CD8-positive, alpha-beta T cell (primary cell): ENCODE measurements at regions of chr2 and their contacts with region 1.

Region 1: GRCh38 chr2:201071479-201072200 is at the starts of genes HYCC2 and NDUFB3:
- DNase-seq: peak; percentile 79 to 98 (median 92)
- ATAC-seq: peak; percentile 93
- H3K4me3 ChIP-seq: peak within 1 kb of the TSS; percentile 61 to 70
- H3K4me3 Mint-ChIP-seq: peak within 1 kb of the TSS; percentile 95
- H3K27ac ChIP-seq: peak within 1 kb of the TSS; percentile 61 to 81
- H3K27ac Mint-ChIP-seq: peak within 1 kb of the TSS; percentile 97
- H3K4me1 ChIP-seq: peaks cover 42% of the 10 kb centered on the region
- H3K4me1 Mint-ChIP-seq: peaks cover 54% of the 10 kb centered on the region
- H3K27me3 ChIP-seq: no peaks in the 10 kb centered on the region
- H3K27me3 Mint-ChIP-seq: no peaks in the 10 kb centered on the region
- CTCF ChIP-seq: peak; percentile 38
- total RNA-seq, gene HYCC2: 35.7 to 36.8 TPM
- total RNA-seq, gene NDUFB3: 11.6 to 13.1 TPM

Region 2: DNA sequence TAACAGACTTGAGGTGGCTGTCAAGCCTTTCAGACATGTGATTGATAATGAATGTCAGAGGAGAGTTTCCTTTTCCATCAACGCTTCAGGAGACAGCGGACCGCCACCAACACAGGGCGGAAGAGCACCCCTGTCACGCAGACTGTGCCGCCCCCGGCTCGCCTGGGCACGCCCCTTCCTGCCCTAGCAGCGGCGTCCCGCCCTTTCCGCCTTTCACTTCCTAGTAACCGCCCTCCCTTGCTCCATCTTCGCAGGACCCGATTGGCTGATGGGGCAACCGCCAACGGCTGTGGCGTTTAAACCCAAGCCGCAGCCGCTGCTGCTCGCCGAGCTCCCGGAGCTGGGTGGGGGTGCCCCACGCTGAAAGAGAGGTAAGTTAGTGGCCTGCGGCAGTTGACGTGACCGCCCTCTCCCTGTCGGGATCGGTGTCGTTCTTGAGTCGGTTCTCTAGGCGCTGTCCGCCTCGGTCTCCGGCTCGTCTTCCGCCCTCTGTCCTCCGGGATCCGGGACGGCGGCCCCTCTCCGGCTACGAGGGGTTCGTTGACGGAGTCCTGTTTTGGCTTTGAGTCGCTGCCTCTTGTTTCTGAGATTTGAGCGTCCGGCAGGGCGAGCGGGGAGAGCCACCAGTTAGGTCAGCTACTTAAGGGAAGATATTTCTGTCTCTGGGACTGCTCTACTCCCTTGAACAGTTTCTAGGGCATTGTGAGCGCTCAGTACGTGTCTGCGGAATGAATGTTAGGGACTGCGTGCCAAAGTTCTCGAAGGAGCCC is 545.6 kb before region 1 on chr2 and contains the start of gene SGO2:
- CTCF ChIA-PET with region 1: no interaction called
- POLR2A ChIA-PET with region 1: no interaction called
- intact Hi-C with region 1: loop called (anchors 5 to 10 kb)
- DNase-seq: peak; percentile 92 to 97 (median 95)
- ATAC-seq: peak; percentile 100
- H3K4me3 ChIP-seq: peak within 1 kb of the TSS; percentile 73 to 84
- H3K4me3 Mint-ChIP-seq: peak within 1 kb of the TSS; percentile 91
- H3K27ac ChIP-seq: peak within 1 kb of the TSS; percentile 18 to 71
- H3K27ac Mint-ChIP-seq: peak within 1 kb of the TSS; percentile 87
- H3K4me1 ChIP-seq: peaks cover 7% of the 10 kb centered on the region
- H3K4me1 Mint-ChIP-seq: peaks cover 10% of the 10 kb centered on the region
- H3K27me3 ChIP-seq: no peaks in the 10 kb centered on the region
- H3K27me3 Mint-ChIP-seq: no peaks in the 10 kb centered on the region
- CTCF ChIP-seq: no peak
- total RNA-seq, gene SGO2: 0.52 to 0.69 TPM

Region 3: DNA sequence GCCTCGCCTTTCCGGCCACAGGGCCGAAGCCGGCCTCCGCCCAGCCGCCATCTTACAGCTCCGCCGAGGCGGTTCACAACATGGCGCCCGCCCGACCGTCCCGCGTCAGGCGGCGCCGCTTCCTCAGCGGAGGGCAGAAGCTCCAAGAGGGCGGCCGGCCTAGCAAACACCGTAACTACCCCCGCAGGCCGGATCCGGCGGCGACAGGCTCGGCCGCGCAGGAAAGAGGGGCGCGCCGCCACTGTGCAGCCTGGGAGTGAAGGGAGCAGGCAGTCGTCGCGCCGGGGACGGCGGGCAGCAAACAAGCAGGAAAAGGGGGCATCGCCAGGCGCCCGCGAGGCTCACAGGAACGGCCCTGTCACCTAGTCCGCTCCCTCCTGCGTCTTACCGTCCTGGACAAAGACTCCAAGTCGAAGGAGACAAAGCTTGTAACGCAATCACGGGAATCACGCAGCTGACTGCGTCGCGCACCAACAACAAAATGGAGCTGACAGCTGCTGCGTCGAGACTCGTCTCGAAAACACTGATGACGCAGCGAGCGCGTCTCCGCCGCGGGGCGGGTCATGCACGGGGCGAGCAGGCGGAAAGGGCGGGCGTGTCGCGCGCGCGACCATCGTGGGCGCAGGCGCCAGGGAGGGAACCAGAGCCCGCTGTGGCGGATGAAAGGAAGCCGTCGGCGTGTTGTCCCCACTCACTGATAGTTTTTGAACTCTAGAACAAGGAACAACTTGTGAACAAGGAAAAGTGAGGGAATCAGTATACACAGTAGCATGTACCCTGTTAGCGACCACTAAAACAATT is 207.3 kb before region 1 on chr2 and contains the start of gene CLK1:
- CTCF ChIA-PET with region 1: no interaction called
- POLR2A ChIA-PET with region 1: interaction called, 7 read pairs
- intact Hi-C with region 1: loop called in 1 of 2 experiments (anchors 1 kb)
- DNase-seq: peak; percentile 94 to 99 (median 98)
- ATAC-seq: peak; percentile 78
- H3K4me3 ChIP-seq: peak within 1 kb of the TSS; percentile 84 to 98
- H3K4me3 Mint-ChIP-seq: peak within 1 kb of the TSS; percentile 96
- H3K27ac ChIP-seq: peak within 1 kb of the TSS; percentile 98 to 100
- H3K27ac Mint-ChIP-seq: peak within 1 kb of the TSS; percentile 100
- H3K4me1 ChIP-seq: peaks cover 29% of the 10 kb centered on the region
- H3K4me1 Mint-ChIP-seq: peaks cover 43% of the 10 kb centered on the region
- H3K27me3 ChIP-seq: no peaks in the 10 kb centered on the region
- H3K27me3 Mint-ChIP-seq: no peaks in the 10 kb centered on the region
- CTCF ChIP-seq: no peak
- total RNA-seq, gene CLK1: 1,353 to 1,404 TPM

Region 4: DNA sequence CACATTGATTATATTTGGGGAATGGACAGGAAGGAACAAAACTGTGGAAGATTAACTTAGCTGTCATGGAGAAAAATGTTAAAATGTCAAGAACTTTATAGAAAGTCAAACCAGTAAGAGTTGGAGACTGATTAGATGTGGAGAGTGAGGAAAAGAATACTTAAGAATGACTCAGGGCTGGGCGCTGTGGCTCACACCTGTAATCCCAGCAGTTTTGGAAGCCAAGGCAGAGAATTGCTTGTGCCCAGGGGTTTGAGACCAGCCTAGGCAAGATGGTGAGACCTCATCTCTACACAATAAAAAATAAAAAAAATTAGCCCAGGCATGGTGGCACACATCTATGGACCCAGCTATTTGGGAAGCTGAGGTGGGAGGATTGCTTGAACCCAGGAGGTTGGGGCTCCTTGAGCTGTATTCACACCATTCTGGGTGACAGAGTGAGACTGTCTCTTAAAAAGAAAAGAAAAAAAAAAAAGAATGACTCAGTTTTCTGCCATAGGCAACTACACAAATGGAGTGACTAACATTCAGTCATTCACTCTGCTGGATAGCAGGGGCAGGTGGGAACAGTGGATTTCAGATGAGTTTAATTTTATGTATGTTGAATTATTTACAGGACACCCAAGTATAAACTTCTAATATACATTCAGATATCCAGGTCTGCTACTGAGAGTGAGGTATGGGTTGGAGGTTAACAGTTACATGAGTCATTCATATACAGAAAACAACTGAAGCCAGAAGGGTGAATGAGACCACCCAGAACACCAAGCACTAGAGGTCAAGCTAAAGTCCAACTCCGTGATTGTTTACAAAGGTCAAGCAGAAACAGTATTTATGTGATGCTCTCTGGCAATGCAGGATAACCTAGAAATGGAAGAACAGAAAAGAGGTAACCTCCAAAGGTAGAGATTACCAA is 142.0 kb before region 1 on chr2:
- CTCF ChIA-PET with region 1: interaction called, 10 read pairs
- POLR2A ChIA-PET with region 1: no interaction called
- intact Hi-C with region 1: no loop called
- DNase-seq: no peak
- ATAC-seq: no peak
- H3K4me3 ChIP-seq: no peak overlapping the region
- H3K4me3 Mint-ChIP-seq: no peak overlapping the region
- H3K27ac ChIP-seq: no peak overlapping the region
- H3K27ac Mint-ChIP-seq: peak overlapping the region; percentile 62
- H3K4me1 ChIP-seq: no peaks in the 10 kb centered on the region
- H3K4me1 Mint-ChIP-seq: no peaks in the 10 kb centered on the region
- H3K27me3 ChIP-seq: no peaks in the 10 kb centered on the region
- H3K27me3 Mint-ChIP-seq: no peaks in the 10 kb centered on the region
- CTCF ChIP-seq: no peak

Region 5: GRCh38 chr2:201118121-201118960 is 46.7 kb after region 1 on chr2:
- CTCF ChIA-PET with region 1: interaction called, 40 read pairs
- POLR2A ChIA-PET with region 1: interaction called, 67 read pairs
- intact Hi-C with region 1: loop called (anchors 1 kb)
- DNase-seq: peak; percentile 77 to 94 (median 89)
- ATAC-seq: peak; percentile 43
- H3K4me3 ChIP-seq: peak overlapping the region; percentile 82 to 95
- H3K4me3 Mint-ChIP-seq: peak overlapping the region; percentile 99
- H3K27ac ChIP-seq: peak overlapping the region; percentile 92
- H3K27ac Mint-ChIP-seq: peak overlapping the region; percentile 100
- H3K4me1 ChIP-seq: peaks cover 47% of the 10 kb centered on the region
- H3K4me1 Mint-ChIP-seq: peaks cover 67% of the 10 kb centered on the region
- H3K27me3 ChIP-seq: no peaks in the 10 kb centered on the region
- H3K27me3 Mint-ChIP-seq: no peaks in the 10 kb centered on the region
- CTCF ChIP-seq: peak; percentile 64

Region 6: DNA sequence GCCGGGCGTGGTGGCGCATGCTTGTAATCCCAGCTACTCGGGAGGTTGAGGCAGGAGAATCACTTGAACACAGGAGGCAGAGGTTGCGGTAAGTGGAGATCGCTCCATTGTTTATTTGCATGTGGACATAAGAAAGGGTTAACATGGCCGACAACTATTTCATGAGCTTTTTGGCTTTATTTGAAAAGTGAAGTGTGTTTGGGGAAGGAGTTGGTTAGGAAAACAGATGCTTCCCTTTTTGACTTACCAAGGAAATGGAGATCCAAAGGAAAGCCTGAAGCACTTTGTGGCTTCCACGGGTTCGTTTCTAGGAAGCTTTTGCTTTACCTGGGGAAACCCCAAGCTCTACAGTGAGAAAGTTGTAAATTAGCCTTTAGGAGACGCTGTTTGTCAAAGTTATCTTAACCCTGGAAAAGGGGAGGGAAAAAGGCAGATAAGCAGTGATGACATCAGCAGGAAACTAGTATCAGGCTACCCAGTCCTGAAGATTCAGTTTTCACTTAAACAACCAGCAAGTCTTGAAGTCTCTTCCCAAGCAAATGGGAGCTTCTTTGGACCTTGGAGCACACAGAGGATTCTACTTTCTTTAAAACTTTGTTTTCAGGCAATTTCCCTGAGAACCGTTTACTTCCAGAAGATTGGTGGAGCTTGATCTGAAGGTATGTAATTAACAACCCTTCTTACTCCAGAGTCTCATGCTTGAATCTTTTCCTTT is 111.2 kb after region 1 on chr2 and contains the start of gene CASP10:
- CTCF ChIA-PET with region 1: interaction called, 4 read pairs
- POLR2A ChIA-PET with region 1: no interaction called
- intact Hi-C with region 1: loop called (anchors 2 to 5 kb)
- DNase-seq: peak in 5 of 9 experiments; percentile 17 to 89 (median 23)
- ATAC-seq: peak; percentile 87
- H3K4me3 ChIP-seq: peak within 1 kb of the TSS; percentile 57 to 60
- H3K4me3 Mint-ChIP-seq: peak within 1 kb of the TSS; percentile 94
- H3K27ac ChIP-seq: peak within 1 kb of the TSS; percentile 58 to 78
- H3K27ac Mint-ChIP-seq: peak within 1 kb of the TSS; percentile 95
- H3K4me1 ChIP-seq: peaks cover 25% of the 10 kb centered on the region
- H3K4me1 Mint-ChIP-seq: peaks cover 45% of the 10 kb centered on the region
- H3K27me3 ChIP-seq: no peaks in the 10 kb centered on the region
- H3K27me3 Mint-ChIP-seq: no peaks in the 10 kb centered on the region
- CTCF ChIP-seq: peak; percentile 48
- total RNA-seq, gene CASP10: 9.8 to 10.4 TPM